Heart left ventricle (tissue), 16 donors: ENCODE measurements at regions of chr20 and their contacts with region 1.

Region 1: GRCh38 chr20:5950271-5951031 is at the starts of genes MCM8 and TRMT6:
- DNase-seq: peak; percentile 95 to 98 (median 97)
- ATAC-seq: peak; percentile 100
- H3K4me3 ChIP-seq: peak within 1 kb of the TSS; percentile 62 to 94 (median 70)
- H3K27ac ChIP-seq: peak within 1 kb of the TSS in 11 of 12 donors; percentile 43 to 81 (median 71)
- H3K4me1 ChIP-seq: peaks cover 4 to 38% (median 16%) of the 10 kb centered on the region in 12 donors
- H3K27me3 ChIP-seq: no peaks in the 10 kb centered on the region
- CTCF ChIP-seq: peak in 1 of 12 donors; percentile 3
- POLR2A ChIP-seq: peak in 1 of 2 donors; percentile 38
- total RNA-seq, gene MCM8: 3.5 to 8.7 (median 6.6) TPM
- total RNA-seq, gene TRMT6: 5.8 to 12.0 (median 9.8) TPM

Region 2: GRCh38 chr20:5529331-5530148 is 420.9 kb before region 1 on chr20:
- intact Hi-C with region 1: loop called in 2 of 10 experiments (anchors 10 kb)
- DNase-seq: peak; percentile 73 to 91 (median 79)
- ATAC-seq: peak; percentile 73 to 92 (median 88)
- H3K4me3 ChIP-seq: peak overlapping the region in 3 of 12 donors; percentile 1 to 25 (median 23)
- H3K27ac ChIP-seq: no peak overlapping the region
- H3K4me1 ChIP-seq: peaks cover 0 to 22% (median 6%) of the 10 kb centered on the region in 12 donors
- H3K27me3 ChIP-seq: no peaks in the 10 kb centered on the region
- CTCF ChIP-seq: peak; percentile 56 to 90 (median 74)
- POLR2A ChIP-seq: no peak

Region 3: GRCh38 chr20:5557123-5557522 is 393.3 kb before region 1 on chr20:
- intact Hi-C with region 1: loop called in 2 of 10 experiments (anchors 10 kb)
- DNase-seq: peak in 4 of 5 donors; percentile 31 to 46 (median 34)
- ATAC-seq: peak in 3 of 4 donors; percentile 71 to 79 (median 72)
- H3K4me3 ChIP-seq: no peak overlapping the region
- H3K27ac ChIP-seq: no peak overlapping the region
- H3K4me1 ChIP-seq: peaks cover 0 to 9% (median 0%) of the 10 kb centered on the region in 12 donors
- H3K27me3 ChIP-seq: no peaks in the 10 kb centered on the region
- CTCF ChIP-seq: peak; percentile 33 to 69 (median 52)
- POLR2A ChIP-seq: no peak

Region 4: GRCh38 chr20:5569021-5569420 is 381.4 kb before region 1 on chr20:
- intact Hi-C with region 1: loop called in 1 of 10 experiments (anchors 10 kb)
- DNase-seq: peak in 1 of 5 donors; percentile 22
- ATAC-seq: peak in 2 of 4 donors; percentile 65 to 67
- H3K4me3 ChIP-seq: no peak overlapping the region
- H3K27ac ChIP-seq: peak overlapping the region in 1 of 12 donors; percentile 84
- H3K4me1 ChIP-seq: peaks cover 0 to 21% (median 0%) of the 10 kb centered on the region in 12 donors
- H3K27me3 ChIP-seq: no peaks in the 10 kb centered on the region
- CTCF ChIP-seq: peak; percentile 33 to 63 (median 48)
- POLR2A ChIP-seq: no peak

Region 5: DNA sequence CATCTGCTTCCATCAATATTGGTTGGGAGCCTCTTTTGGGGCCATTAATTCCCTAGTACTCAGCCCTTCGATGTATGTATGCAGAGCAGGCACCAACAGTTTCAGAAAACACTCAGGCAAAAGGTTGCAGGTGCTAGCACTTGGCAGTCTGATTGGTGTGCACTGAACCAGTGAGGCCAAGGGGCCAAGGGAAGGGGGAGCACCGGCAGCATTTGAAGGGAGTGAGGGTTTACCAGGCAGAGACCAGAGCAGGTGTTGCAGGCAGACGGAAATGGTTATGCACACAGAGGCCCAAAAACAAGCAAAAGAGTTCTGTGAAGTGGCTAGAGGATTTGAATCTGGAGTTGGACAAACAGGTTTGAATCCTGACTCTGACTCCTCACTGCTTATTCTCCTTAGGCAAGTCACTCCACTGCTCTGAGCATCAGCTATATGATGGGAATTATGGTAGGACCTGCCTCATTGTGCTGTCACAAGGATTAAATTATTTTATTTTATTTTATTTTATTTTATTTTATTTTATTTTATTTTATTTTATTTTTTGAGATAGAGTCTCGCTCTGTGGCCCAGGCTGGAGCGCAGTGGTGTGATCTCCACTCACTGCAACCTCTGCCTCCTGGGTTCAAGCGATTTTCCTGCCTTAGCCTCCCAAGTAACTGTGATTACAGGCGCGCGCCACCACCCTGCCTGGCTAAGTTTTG is 258.4 kb before region 1 on chr20:
- intact Hi-C with region 1: no loop called
- DNase-seq: no peak
- ATAC-seq: no peak
- H3K4me3 ChIP-seq: no peak overlapping the region
- H3K27ac ChIP-seq: no peak overlapping the region
- H3K4me1 ChIP-seq: peaks cover 0 to 27% (median 11%) of the 10 kb centered on the region in 12 donors
- H3K27me3 ChIP-seq: no peaks in the 10 kb centered on the region
- CTCF ChIP-seq: no peak
- POLR2A ChIP-seq: no peak

Region 6: DNA sequence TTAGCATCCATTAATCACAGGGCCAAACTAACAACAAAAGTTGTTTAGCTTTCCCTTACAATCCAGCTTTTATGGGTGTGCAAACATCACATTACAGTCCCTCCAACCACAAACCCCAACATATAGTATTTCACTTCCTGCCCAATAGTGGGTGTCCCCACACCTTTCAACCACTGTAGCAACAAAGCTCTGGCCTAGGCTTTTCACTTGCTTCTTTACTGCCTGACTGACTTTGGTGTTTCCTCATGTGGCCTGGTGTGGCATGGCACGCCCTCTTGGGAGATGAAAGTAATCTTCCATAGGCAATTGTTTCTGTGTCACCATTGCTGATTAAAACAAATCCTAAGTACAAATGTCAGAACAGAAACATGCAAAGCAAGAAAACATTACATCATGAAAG is 46.3 kb after region 1 on chr20:
- intact Hi-C with region 1: loop called in 1 of 10 experiments (anchors 5 kb)
- DNase-seq: no peak
- ATAC-seq: peak in 1 of 4 donors; percentile 34
- H3K4me3 ChIP-seq: no peak overlapping the region
- H3K27ac ChIP-seq: no peak overlapping the region
- H3K4me1 ChIP-seq: no peaks in the 10 kb centered on the region
- H3K27me3 ChIP-seq: no peaks in the 10 kb centered on the region
- CTCF ChIP-seq: no peak
- POLR2A ChIP-seq: no peak